Naive thymus-derived CD8-positive, alpha-beta T cell (primary cell): ENCODE measurements at regions of chr14 and their contacts with region 1.

Region 1: GRCh38 chr14:105045710-105046326 is 19.4 kb downstream of the GPR132 start:
- DNase-seq: peak; percentile 84 to 96 (median 92)
- ATAC-seq: peak; percentile 78 to 91
- H3K4me3 Mint-ChIP-seq: peak overlapping the region in 8 of 10 donors; percentile 15 to 52 (median 39)
- H3K27ac Mint-ChIP-seq: peak overlapping the region; percentile 64 to 93 (median 81)
- H3K4me1 Mint-ChIP-seq: peaks cover 8 to 17% (median 14%) of the 10 kb centered on the region in 4 donors
- H3K27me3 Mint-ChIP-seq: no peaks in the 10 kb centered on the region

Region 2: DNA sequence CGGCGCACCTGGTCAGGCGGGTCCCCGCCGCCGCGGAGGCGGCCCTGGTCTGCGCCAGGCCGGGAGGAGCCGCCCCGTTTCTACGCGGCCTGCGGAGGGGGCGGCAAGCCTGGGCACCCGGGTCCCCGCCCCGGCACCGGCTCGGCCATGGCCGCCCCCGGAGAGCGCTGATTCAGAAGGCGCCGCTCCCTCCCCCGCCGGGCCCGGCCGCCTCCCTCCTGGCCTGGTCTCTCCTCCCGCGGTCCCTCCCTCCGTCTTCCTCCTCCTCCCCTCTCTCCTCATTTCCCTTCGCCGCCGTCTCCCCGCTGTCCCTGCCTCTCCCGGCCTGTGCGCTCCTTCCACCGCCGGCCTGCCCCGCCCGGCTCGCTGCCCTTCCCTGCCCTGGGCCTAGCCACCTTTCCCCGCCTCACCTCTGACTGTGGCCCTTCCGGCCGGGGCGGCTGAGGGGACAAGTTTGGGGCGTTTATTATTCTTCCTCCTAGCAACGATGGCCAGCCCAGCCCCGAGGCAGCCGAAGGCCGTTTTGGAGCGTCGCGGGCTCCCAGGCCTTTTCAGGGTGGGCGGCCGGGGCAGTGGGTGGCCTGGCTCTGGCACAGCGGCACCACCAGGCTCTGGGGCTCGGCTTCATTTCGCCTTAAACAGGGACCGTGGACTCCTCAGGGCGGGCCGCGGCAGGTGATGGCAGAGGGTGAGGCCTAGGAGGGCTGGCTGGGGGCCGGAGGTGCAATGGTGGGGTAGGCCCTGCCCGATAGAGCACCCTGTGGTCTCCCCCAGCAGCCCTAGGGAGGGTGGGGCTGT is 180.0 kb before region 1 on chr14:
- POLR2A ChIA-PET with region 1: no interaction called
- DNase-seq: peak in 1 of 10 donors; percentile 16
- ATAC-seq: peak; percentile 29 to 57
- H3K4me3 Mint-ChIP-seq: peak overlapping the region; percentile 4 to 81 (median 64)
- H3K27ac Mint-ChIP-seq: peak overlapping the region in 2 of 10 donors; percentile 11 to 61
- H3K4me1 Mint-ChIP-seq: peaks cover 7 to 12% (median 9%) of the 10 kb centered on the region in 4 donors
- H3K27me3 Mint-ChIP-seq: peaks cover 1 to 38% (median 12%) of the 10 kb centered on the region in 5 donors

Region 3: DNA sequence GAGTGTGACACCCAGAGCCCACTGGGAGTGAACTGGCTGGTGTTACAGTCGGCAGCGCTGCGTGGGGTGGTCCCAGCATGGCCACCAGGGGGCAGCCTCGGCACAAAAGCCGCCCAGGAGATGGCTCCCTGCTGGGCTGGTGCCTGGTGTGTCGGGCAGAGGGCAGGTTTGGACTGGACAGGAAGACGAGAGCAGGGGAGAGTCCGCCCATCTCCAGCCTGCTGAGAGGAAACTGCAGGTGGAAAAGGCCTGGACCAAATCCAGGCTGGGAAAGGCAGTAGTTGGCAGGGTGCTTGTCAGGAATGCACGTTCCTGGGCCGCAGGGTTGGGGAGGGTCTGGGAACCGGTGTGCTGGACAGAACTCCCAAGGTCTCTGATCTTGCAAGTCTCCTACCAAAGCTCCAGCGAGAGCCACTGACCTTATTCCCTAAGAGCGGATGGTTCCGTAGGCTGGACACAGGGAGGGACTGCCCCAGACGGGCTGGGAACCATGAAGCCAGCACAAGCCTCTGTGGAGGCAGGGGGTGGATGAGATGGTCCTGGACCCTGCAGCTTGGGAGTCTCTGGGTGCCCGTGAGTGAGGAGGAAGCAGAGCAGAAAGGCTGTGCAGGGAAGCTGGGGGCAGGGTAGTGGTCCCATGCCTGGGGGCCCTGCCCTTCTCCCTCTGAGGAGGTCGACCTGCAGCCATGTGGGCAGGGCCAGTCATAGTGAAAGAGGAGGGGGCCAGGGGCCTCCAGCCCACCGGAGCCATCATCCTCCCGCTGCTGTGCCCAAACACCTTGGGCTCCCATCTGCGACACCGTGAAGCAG is 69.4 kb before region 1 on chr14:
- POLR2A ChIA-PET with region 1: interaction called, 19 read pairs
- DNase-seq: peak; percentile 70 to 90 (median 84)
- ATAC-seq: peak; percentile 85 to 86
- H3K4me3 Mint-ChIP-seq: peak overlapping the region; percentile 31 to 88 (median 75)
- H3K27ac Mint-ChIP-seq: peak overlapping the region in 5 of 10 donors; percentile 42 to 91 (median 71)
- H3K4me1 Mint-ChIP-seq: peaks cover 7 to 25% (median 16%) of the 10 kb centered on the region in 4 donors
- H3K27me3 Mint-ChIP-seq: peaks cover 5 to 35% (median 16%) of the 10 kb centered on the region in 5 donors

Region 4: DNA sequence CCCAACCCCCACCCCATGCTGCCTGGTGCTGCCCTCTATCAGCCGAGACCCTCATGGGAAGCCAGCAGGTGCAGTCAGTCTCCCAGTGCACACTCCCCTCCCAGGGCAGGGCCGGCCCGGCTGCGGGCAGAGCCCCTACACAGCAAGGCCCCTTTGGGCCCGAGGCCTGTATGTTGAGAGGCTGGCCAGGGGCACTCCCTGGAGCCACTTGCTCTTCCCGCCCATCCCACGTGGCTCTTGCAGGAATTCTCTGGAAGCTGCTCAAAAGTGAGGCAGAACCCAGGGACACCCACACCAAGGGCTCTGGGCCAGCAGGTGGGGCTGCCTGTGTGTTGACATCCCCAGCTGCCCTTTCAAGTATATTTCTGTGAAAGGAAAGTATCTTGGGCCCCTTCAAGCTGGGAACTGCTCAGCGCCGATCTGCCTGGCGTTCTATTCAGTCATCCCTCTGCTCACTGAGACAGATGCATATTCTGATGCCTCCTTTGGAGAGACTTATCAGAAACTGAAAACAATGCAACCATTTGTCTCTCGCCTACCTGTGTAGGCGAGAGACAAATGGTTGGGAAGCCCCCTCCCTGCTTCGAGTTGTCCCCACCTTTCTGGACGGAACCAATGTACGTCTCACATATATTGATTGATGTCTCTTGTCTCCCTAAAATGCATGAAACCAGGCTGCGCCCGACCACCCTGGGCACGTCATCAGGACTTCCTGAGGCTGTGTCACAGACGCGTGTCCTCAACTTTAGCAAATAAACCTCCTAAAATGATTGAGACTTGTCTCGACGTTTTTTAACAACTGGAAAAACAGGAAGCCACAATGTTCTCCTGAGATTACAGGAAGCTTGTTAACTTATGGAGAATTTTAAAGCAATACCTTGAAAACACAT is 13.5 kb after region 1 on chr14:
- POLR2A ChIA-PET with region 1: interaction called, 11 read pairs
- DNase-seq: peak in 9 of 10 donors; percentile 53 to 89 (median 85)
- ATAC-seq: peak; percentile 66 to 86
- H3K4me3 Mint-ChIP-seq: peak overlapping the region; percentile 78 to 97 (median 88)
- H3K27ac Mint-ChIP-seq: peak overlapping the region; percentile 94 to 99 (median 98)
- H3K4me1 Mint-ChIP-seq: peaks cover 27 to 61% (median 57%) of the 10 kb centered on the region in 4 donors
- H3K27me3 Mint-ChIP-seq: no peaks in the 10 kb centered on the region

Region 5: DNA sequence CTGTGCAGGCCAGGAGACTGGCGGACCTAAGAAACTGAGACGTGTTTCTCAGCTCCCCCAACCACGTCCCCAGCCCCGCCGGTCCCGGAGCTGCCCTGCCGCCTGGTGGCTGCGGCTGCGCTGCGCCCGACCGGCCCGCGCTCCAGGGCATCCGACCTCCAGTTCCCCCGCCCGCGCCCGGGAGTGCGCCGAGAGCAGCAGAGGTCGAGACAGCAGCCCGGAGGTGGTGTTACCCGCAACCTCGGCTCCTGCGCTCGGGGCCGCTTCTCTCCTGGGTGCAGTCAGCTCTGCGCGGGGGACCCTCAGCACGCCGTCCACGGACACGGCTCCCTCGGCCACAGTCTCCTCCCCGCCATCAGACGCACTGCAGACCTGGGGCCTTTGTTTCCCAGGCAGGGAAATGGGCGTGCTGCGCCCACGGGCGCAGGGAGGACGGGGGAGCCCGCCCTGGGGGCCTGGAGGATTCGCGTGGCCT is 41.1 kb after region 1 on chr14:
- POLR2A ChIA-PET with region 1: interaction called, 17 read pairs
- DNase-seq: peak; percentile 74 to 91 (median 84)
- ATAC-seq: peak; percentile 86 to 89
- H3K4me3 Mint-ChIP-seq: peak overlapping the region; percentile 74 to 86 (median 79)
- H3K27ac Mint-ChIP-seq: peak overlapping the region in 8 of 10 donors; percentile 75 to 92 (median 84)
- H3K4me1 Mint-ChIP-seq: peaks cover 14 to 33% (median 25%) of the 10 kb centered on the region in 4 donors
- H3K27me3 Mint-ChIP-seq: no peaks in the 10 kb centered on the region

Region 6: GRCh38 chr14:105118656-105119403 is 73.0 kb after region 1 on chr14:
- POLR2A ChIA-PET with region 1: no interaction called
- DNase-seq: no peak
- ATAC-seq: no peak
- H3K4me3 Mint-ChIP-seq: no peak overlapping the region
- H3K27ac Mint-ChIP-seq: no peak overlapping the region
- H3K4me1 Mint-ChIP-seq: no peaks in the 10 kb centered on the region
- H3K27me3 Mint-ChIP-seq: peaks cover 4 to 24% (median 10%) of the 10 kb centered on the region in 5 donors